ENCODE measurements at regions of chr10 and their contacts with region 1.

Region 1: GRCh38 chr10:28587970-28588290 is 55.0 kb downstream of the WAC start:
- DNase-seq: no peak
- H3K4me3 ChIP-seq: no peak overlapping the region
- H3K27ac ChIP-seq: no peak overlapping the region
- H3K4me1 ChIP-seq: peaks cover 9% of the 10 kb centered on the region
- H3K27me3 ChIP-seq: no peaks in the 10 kb centered on the region
- CTCF ChIP-seq: no peak

Region 2: DNA sequence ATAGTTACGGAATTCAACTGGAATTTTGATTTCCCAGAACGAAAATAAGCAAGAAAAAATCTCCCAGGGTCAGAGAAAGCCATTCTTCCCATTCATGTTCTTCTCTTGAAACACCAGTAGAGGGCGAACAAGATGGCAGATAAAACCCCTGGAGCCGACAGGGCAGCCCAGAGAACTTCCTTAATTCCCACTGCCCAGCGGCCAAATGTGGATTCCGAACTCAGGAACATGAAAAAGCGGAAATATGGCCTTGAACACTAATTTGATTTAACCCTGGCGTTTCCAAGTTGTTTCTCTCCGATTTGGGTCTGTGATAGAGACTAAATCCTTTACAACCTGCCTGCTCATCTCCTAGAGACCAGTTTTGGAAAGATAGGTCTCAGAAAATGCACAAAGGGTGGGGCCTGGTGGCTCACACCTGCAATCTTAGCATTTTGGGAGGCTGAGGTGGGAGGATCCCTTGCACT is 155.7 kb before region 1 on chr10:
- CTCF ChIA-PET with region 1: no interaction called
- POLR2A ChIA-PET with region 1: no interaction called
- intact Hi-C with region 1: loop called (anchors 10 kb)
- DNase-seq: peak; percentile 45 to 58
- H3K4me3 ChIP-seq: no peak overlapping the region
- H3K27ac ChIP-seq: no peak overlapping the region
- H3K4me1 ChIP-seq: no peaks in the 10 kb centered on the region
- H3K27me3 ChIP-seq: no peaks in the 10 kb centered on the region
- CTCF ChIP-seq: peak; percentile 75

Region 3: DNA sequence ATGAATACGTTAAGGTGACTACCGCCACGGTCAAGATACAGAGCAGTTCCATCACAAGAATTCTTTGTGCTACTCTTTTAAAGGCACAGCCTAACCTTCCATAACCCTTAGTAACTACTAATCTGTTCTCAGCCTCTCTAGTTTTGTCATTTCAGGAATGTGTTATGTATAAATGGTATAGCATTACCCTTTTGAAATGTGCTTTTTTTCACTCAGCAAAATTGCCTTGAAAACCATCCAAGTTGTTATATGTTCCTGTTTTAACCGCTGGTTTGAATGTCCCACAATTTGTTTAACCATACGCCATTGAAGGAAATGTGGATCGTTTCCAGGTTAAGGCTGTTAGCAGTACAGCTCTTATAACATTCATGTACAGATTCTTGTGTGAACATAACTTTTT is 23.0 kb before region 1 on chr10:
- CTCF ChIA-PET with region 1: no interaction called
- POLR2A ChIA-PET with region 1: no interaction called
- intact Hi-C with region 1: no loop called
- DNase-seq: no peak
- H3K4me3 ChIP-seq: no peak overlapping the region
- H3K27ac ChIP-seq: no peak overlapping the region
- H3K4me1 ChIP-seq: no peaks in the 10 kb centered on the region
- H3K27me3 ChIP-seq: no peaks in the 10 kb centered on the region
- CTCF ChIP-seq: no peak